ENCODE measurements at regions of chr10 and their contacts with region 1.

Region 1: GRCh38 chr10:3757638-3758490 is 27.1 kb downstream of the KLF6 start:
- DNase-seq: peak; percentile 76
- ATAC-seq: peak; percentile 68
- H3K4me3 ChIP-seq: peak overlapping the region in 1 of 5 experiments; percentile 18
- H3K4me3 Mint-ChIP-seq: peak overlapping the region; percentile 67
- H3K27ac ChIP-seq: peak overlapping the region; percentile 60 to 63
- H3K27ac Mint-ChIP-seq: peak overlapping the region; percentile 92
- H3K4me1 ChIP-seq: peaks cover 49 to 55% of the 10 kb centered on the region in 2 donors
- H3K4me1 Mint-ChIP-seq: peaks cover 59% of the 10 kb centered on the region
- H3K27me3 ChIP-seq: no peaks in the 10 kb centered on the region
- H3K27me3 Mint-ChIP-seq: no peaks in the 10 kb centered on the region
- CTCF ChIP-seq: no peak

Region 2: GRCh38 chr10:3090914-3091787 is 666.7 kb before region 1 on chr10:
- CTCF ChIA-PET with region 1: no interaction called
- POLR2A ChIA-PET with region 1: no interaction called
- intact Hi-C with region 1: no loop called
- DNase-seq: no peak
- ATAC-seq: no peak
- H3K4me3 ChIP-seq: no peak overlapping the region
- H3K4me3 Mint-ChIP-seq: no peak overlapping the region
- H3K27ac ChIP-seq: no peak overlapping the region
- H3K27ac Mint-ChIP-seq: no peak overlapping the region
- H3K4me1 ChIP-seq: peaks cover 0 to 4% of the 10 kb centered on the region in 2 donors
- H3K4me1 Mint-ChIP-seq: peaks cover 21% of the 10 kb centered on the region
- H3K27me3 ChIP-seq: no peaks in the 10 kb centered on the region
- H3K27me3 Mint-ChIP-seq: no peaks in the 10 kb centered on the region
- CTCF ChIP-seq: no peak

Region 3: GRCh38 chr10:3482200-3483138 is 275.4 kb before region 1 on chr10:
- CTCF ChIA-PET with region 1: no interaction called
- POLR2A ChIA-PET with region 1: no interaction called
- intact Hi-C with region 1: loop called (anchors 1 kb)
- DNase-seq: peak; percentile 17
- ATAC-seq: no peak
- H3K4me3 ChIP-seq: peak overlapping the region in 1 of 5 experiments; percentile 10
- H3K4me3 Mint-ChIP-seq: peak overlapping the region; percentile 26
- H3K27ac ChIP-seq: no peak overlapping the region
- H3K27ac Mint-ChIP-seq: peak overlapping the region; percentile 39
- H3K4me1 ChIP-seq: peaks cover 60 to 65% of the 10 kb centered on the region in 2 donors
- H3K4me1 Mint-ChIP-seq: peaks cover 62% of the 10 kb centered on the region
- H3K27me3 ChIP-seq: no peaks in the 10 kb centered on the region
- H3K27me3 Mint-ChIP-seq: no peaks in the 10 kb centered on the region
- CTCF ChIP-seq: no peak

Region 4: GRCh38 chr10:3666525-3667302 is 91.2 kb before region 1 on chr10:
- CTCF ChIA-PET with region 1: no interaction called
- POLR2A ChIA-PET with region 1: no interaction called
- intact Hi-C with region 1: no loop called
- DNase-seq: peak; percentile 36
- ATAC-seq: no peak
- H3K4me3 ChIP-seq: no peak overlapping the region
- H3K4me3 Mint-ChIP-seq: peak overlapping the region; percentile 39
- H3K27ac ChIP-seq: no peak overlapping the region
- H3K27ac Mint-ChIP-seq: peak overlapping the region; percentile 2
- H3K4me1 ChIP-seq: peaks cover 15 to 25% of the 10 kb centered on the region in 2 donors
- H3K4me1 Mint-ChIP-seq: peaks cover 17% of the 10 kb centered on the region
- H3K27me3 ChIP-seq: peaks cover 0 to 15% (median 0%) of the 10 kb centered on the region in 4 experiments
- H3K27me3 Mint-ChIP-seq: peaks cover 10% of the 10 kb centered on the region
- CTCF ChIP-seq: no peak

Region 5: DNA sequence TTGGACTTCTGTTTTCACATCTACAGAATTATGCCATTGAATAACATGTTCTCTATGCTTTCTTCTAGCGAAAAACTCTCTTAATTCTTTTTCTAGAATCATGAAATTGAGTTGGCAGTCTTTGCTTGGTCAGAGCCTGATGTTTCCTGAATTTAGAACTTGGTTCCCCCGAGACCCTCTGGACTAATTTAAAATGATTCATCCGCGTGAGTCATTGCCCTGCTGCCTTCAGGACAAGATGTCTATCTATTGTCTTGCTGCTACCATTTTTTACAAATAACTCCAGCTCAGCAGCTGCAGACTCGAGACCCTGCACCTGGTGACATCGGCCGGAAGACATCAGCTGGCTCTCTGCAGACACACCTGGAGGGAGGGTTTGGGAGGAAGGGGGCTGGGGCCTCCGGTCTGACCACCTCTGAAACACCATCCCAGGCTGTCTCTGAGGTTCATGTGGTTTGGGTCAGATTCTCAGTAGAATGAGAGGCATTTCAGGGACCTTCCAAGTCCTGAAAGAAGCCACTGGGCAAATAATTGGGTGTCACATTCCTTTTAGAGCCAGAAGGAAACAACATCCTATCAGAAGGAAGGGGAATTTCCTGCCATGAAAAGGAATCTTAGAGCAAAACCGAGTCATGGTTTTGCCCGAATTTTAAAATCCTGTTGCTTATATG is 48.1 kb after region 1 on chr10:
- CTCF ChIA-PET with region 1: interaction called, 4 read pairs
- POLR2A ChIA-PET with region 1: no interaction called
- intact Hi-C with region 1: loop called (anchors 1 kb)
- DNase-seq: peak; percentile 59
- ATAC-seq: peak; percentile 54
- H3K4me3 ChIP-seq: peak overlapping the region in 1 of 5 experiments; percentile 16
- H3K4me3 Mint-ChIP-seq: peak overlapping the region; percentile 74
- H3K27ac ChIP-seq: peak overlapping the region; percentile 84 to 85
- H3K27ac Mint-ChIP-seq: peak overlapping the region; percentile 97
- H3K4me1 ChIP-seq: peaks cover 49 to 50% of the 10 kb centered on the region in 2 donors
- H3K4me1 Mint-ChIP-seq: peaks cover 58% of the 10 kb centered on the region
- H3K27me3 ChIP-seq: no peaks in the 10 kb centered on the region
- H3K27me3 Mint-ChIP-seq: no peaks in the 10 kb centered on the region
- CTCF ChIP-seq: no peak

Region 6: DNA sequence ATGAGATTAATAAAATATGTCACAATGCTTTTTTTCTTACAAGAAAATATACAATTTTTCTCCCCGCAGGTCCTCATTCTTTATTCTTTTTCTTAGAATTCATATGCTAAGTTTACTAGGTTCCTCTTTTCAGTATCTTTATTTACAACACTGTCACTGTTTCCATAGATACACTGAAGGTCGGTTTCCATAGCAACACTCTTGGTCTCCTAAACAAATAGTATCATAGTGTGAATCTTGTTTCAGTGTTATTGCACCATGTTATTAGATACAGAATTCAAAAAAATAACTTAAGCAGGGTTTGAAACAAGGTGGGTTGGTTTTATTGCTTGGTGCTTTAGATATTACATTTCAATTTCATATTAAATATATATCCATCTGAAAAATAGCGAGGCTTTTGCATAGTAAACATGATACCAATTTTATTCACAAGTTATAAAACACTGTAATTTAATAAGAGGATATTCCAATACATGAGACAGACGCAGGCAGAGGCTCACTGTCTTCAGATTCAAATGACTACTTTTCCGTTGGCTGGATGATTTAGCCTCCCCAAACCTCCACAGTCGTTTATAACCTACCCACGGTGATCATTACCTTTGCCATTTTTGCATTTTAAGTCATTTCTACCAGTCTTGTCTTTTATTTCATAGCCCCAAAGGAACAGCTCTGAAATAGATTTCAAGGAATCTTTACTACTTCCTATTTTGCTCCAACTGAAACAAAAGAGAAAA is 116.0 kb after region 1 on chr10:
- CTCF ChIA-PET with region 1: no interaction called
- POLR2A ChIA-PET with region 1: no interaction called
- intact Hi-C with region 1: no loop called
- DNase-seq: peak; percentile 93
- ATAC-seq: peak; percentile 56
- H3K4me3 ChIP-seq: peak overlapping the region in 1 of 5 experiments; percentile 37
- H3K4me3 Mint-ChIP-seq: peak overlapping the region; percentile 57
- H3K27ac ChIP-seq: peak overlapping the region; percentile 89 to 99
- H3K27ac Mint-ChIP-seq: peak overlapping the region; percentile 98
- H3K4me1 ChIP-seq: peaks cover 44 to 50% of the 10 kb centered on the region in 2 donors
- H3K4me1 Mint-ChIP-seq: peaks cover 50% of the 10 kb centered on the region
- H3K27me3 ChIP-seq: no peaks in the 10 kb centered on the region
- H3K27me3 Mint-ChIP-seq: no peaks in the 10 kb centered on the region
- CTCF ChIP-seq: no peak

Region 7: GRCh38 chr10:3935141-3935540 is 177.3 kb after region 1 on chr10:
- CTCF ChIA-PET with region 1: no interaction called
- POLR2A ChIA-PET with region 1: interaction called, 3 read pairs
- intact Hi-C with region 1: loop called (anchors 1 kb)
- DNase-seq: peak; percentile 78
- ATAC-seq: peak; percentile 97
- H3K4me3 ChIP-seq: peak overlapping the region in 4 of 5 experiments; percentile 10 to 51 (median 40)
- H3K4me3 Mint-ChIP-seq: peak overlapping the region; percentile 72
- H3K27ac ChIP-seq: peak overlapping the region; percentile 68
- H3K27ac Mint-ChIP-seq: peak overlapping the region; percentile 87
- H3K4me1 ChIP-seq: peaks cover 13 to 21% of the 10 kb centered on the region in 2 donors
- H3K4me1 Mint-ChIP-seq: peaks cover 27% of the 10 kb centered on the region
- H3K27me3 ChIP-seq: no peaks in the 10 kb centered on the region
- H3K27me3 Mint-ChIP-seq: no peaks in the 10 kb centered on the region
- CTCF ChIP-seq: no peak

Region 8: GRCh38 chr10:4333459-4333894 is 575.6 kb after region 1 on chr10:
- CTCF ChIA-PET with region 1: no interaction called
- POLR2A ChIA-PET with region 1: no interaction called
- intact Hi-C with region 1: loop called (anchors 2 kb)
- DNase-seq: no peak
- ATAC-seq: peak; percentile 46
- H3K4me3 ChIP-seq: no peak overlapping the region
- H3K4me3 Mint-ChIP-seq: no peak overlapping the region
- H3K27ac ChIP-seq: peak overlapping the region; percentile 84 to 96
- H3K27ac Mint-ChIP-seq: no peak overlapping the region
- H3K4me1 ChIP-seq: peaks cover 3% of the 10 kb centered on the region in 2 donors
- H3K4me1 Mint-ChIP-seq: no peaks in the 10 kb centered on the region
- H3K27me3 ChIP-seq: no peaks in the 10 kb centered on the region
- H3K27me3 Mint-ChIP-seq: no peaks in the 10 kb centered on the region
- CTCF ChIP-seq: peak; percentile 5